ENCODE measurements at regions of chr1 and their contacts with region 1.

Region 1: DNA sequence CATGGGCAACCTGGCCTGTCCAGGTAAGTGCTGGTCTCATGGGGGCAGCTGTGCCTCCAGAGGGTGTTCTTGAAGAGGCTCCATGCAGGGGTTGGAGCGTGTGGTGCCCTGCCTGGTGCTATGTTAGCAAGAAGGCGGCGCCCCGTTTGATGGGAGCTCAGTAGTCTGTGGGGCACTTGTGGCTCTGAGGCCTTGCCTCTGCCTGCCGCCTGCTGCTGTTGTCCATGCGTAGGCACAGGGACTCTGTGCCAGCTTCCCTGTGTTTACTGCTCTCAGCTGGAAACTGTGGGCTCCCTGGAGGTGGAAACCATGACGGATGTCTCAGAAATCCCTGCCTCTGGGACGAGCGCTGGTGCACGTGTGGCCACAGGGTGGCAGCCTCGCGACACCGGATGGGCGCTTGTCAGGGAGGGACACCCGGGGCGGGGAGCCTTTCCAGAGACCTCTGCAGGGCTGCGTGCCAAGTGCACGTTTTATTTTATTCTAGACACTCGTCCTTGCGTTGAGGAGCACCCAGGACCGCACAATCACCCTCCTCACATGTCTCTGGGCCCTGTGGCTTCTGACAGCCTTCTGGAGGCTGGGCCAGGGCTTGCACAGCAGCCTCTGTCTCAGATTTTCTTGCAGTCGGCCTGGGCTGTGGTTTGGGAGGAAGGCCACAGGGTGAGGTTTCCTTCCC is 27.1 kb downstream of the SNAP47 start:
- DNase-seq: peak; percentile 91

Region 2: DNA sequence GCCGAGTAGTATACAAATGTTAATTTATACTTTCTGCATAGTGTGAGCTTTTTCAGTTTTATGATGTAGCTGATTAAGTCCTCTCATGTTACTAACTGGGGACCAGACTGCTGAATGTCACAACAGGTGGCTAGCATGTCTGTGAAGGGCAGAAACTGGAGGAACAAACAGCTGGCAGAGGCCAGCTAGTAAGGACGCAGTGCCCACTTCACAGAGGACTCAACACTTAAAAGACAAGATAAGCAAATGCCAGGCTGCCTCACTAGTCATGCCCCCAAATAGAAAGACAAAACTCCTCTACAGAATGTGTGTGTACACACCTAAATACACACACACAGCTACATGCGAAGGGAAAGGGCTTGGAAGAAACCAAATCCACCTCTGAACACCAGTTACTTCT is 272.8 kb before region 1 on chr1:
- intact Hi-C with region 1: loop called (anchors 10 kb)
- DNase-seq: no peak

Region 3: DNA sequence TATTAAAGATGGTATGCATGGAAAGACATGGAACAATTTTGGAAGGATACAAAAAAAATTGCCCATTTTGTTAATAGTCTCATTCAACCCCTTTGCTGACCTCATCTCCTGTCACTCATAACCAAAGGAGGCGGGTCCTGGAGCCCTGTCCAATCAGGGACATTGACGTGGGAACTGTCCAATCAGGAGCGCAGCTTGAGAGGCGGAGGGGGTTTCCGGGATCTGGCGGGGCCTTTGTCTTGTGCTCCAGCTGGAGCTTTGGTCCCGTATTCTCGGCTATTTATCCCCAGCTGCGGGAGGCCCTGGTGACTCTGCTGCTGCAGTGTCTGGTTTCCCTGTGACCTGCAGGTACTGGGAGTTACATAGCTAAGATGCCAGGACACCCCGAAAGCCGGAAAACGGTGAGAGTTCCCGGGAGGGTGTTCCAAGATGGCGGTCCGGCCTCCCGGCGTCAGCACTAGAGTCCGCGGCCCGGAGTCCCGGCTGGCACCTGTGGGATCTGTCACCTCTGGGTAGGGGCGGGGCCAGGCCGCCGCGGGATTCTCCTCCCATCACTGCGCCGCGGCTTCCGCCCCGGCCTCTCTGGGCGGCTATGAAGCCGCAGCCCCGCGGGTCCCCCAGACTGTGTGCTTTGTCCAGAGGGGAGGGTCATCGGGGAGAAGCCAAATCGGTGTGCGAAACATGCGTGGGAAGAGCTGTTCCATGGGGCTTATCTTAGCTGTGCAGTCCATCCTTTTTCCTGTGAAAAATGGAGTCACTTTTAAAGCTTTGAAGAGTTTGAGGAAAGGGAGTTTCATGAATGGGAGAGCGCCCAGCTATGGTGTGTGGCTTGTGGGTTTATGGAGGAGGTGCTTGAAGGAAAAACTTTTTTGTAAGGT is 198.8 kb before region 1 on chr1 and contains the start of gene ZNF678:
- intact Hi-C with region 1: no loop called
- DNase-seq: peak; percentile 93
- total RNA-seq, gene ZNF678: 4.5 TPM

Region 4: GRCh38 chr1:227728059-227728891 is 34.1 kb before region 1 on chr1:
- intact Hi-C with region 1: loop called (anchors 5 kb)
- DNase-seq: peak; percentile 88

Region 5: DNA sequence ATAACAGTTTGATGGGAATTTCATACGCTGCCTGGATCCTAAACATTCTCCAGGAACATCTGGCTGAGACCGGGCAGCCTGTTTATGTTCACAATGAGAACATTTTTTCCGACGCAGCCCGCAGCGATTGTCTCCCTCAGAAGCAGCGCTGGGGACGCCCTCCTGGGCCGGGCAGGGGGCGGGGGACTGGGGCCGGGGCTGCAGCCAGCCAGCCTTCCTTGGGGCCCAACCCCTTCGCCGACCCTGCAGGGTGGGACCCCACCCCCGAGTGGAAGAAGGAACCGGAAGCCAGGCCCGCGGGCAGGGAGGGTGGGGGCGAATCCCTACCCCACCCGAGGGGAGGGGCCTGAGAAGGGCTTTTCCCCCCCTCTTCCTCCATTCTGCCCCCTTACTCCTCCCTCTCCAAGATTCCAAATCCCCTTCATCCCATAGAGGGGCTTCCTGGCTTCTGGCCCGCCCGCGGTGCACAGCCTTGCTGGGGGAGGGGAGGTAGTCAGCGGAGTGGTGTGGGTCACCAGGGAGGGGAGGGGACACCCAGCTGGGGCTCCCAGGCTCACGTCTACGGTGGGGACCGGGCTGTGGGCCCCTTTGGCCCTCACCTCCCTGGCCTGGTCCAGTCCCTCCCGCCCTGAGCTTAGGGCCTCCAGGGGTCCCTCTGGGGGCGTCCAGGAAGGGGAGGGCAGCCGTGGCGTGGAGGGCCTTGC is 124.8 kb after region 1 on chr1:
- intact Hi-C with region 1: no loop called
- DNase-seq: peak; percentile 78

Region 6: GRCh38 chr1:227946624-227947385 is 184.4 kb after region 1 on chr1:
- intact Hi-C with region 1: loop called (anchors 1 kb)
- DNase-seq: peak; percentile 88